ENCODE measurements at regions of chr19 and their contacts with region 1.

Region 1: DNA sequence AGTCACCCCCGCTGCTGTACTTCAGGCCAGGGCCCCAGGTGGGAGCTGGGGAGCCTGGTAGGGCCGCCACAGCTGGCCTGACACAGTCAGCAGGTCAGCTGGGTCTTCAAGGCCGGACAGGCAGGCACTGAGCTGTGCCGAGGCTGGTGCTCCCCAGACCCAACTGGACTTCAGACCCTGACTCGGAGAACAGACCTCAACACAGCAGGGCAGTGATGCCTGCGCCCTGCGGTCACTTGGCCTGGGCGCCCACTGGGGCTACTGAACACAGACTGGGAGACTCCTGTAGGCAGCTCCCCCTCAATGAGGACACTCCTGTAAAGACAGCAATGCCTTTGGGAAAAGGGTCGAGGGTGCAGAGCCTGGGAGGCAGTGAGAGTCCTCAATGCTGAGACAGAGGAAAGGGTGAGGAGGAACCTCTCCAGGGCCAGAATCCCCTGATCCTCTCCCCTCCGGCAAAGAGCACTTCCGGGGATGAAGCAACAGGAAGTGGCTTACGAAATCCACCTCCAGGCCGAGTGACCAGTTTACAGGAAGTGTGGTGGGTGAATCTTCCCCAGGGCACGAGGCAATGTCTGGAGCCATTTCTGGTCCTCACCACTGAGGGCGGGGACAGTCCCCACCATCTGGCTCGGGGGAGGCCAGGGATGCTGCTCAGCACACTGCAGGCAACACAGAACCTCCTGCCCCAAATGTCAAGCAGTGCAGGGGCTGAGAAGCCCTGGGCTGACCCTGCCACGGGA is 40.8 kb upstream of the ISYNA1 start:
- DNase-seq: peak; percentile 93
- H3K4me3 Mint-ChIP-seq: peak overlapping the region; percentile 38
- H3K27ac Mint-ChIP-seq: peak overlapping the region; percentile 87
- H3K4me1 Mint-ChIP-seq: peaks cover 65% of the 10 kb centered on the region
- H3K27me3 Mint-ChIP-seq: no peaks in the 10 kb centered on the region

Region 2: DNA sequence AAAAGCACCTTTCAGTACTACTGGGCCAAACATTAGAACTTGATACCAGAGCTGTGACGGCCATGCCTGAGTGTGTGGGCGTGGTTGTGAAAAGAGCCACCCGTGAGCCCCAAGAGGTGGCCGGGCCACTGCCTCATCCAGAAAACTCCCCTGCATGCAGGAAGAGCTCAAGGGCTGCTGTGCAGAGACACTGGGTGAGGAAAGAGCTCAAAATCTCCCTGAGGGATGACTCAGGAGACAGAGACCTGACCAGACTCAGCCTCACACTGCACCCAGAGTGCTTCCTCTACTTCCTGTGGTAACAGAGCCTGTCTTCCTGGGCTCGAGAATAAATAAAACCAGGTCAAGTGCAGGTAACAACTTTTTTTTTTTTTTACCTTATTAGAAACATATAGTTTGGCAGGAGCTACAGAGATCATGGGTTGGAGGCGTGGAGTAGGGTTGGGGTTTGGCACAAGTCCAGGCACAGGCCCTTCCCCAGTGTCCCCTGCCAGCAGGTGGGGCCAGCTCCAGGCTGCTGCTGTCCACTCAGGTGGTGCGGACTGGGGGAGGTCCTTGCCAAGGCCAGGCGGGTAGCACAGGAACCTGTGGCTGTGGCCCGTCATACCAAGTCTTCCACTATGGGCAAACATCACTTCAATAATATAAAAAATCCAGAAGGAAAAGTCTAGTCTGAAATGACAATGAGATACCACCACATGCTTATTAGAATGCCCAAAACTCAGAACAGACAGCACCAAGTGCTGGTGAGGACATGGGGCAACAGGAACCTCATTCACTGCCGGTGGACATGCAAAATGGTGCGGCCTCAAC is 17.6 kb after region 1 on chr19:
- CTCF ChIA-PET with region 1: interaction called, 4 read pairs
- intact Hi-C with region 1: loop called (anchors 1 kb)
- DNase-seq: peak; percentile 85
- H3K4me3 Mint-ChIP-seq: no peak overlapping the region
- H3K27ac Mint-ChIP-seq: peak overlapping the region; percentile 78
- H3K4me1 Mint-ChIP-seq: peaks cover 70% of the 10 kb centered on the region
- H3K27me3 Mint-ChIP-seq: no peaks in the 10 kb centered on the region